ENCODE measurements at regions of chr1 and their contacts with region 1.

Region 1: DNA sequence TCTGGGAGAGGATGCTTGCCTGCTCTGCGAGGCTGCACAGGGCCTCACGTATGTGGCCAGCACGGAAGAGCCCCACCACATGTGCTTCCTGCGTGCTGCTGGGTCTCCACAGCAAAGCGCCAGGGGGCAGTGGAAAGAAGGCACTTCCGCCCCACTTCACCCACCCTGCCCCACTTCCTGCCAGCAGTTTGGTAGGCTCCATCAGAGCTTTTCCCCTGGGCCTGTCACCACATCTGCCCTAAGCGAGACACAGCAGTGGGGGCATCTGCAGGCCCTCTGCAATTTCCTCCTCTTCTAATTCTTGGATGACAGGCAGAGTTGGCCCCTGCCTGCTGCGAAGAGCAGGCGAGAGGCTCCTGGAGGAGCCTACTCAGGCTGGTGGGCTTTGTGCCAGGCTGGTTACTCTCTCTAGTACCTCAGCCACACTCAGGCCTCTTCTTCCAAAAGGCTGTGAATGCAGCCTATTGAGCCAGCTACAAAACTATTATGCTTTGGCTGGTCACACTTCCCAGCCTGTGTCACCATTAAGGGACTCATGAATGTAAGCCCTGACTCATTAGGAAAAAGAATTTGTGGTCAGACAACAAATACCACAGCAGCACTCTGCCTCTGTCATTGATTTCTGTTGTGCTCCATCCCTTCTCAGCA is 25.0 kb downstream of the CD244 start:
- DNase-seq: peak; percentile 90
- H3K4me3 Mint-ChIP-seq: peak overlapping the region; percentile 16
- H3K27ac Mint-ChIP-seq: peak overlapping the region; percentile 82
- H3K4me1 Mint-ChIP-seq: peaks cover 49% of the 10 kb centered on the region
- H3K27me3 Mint-ChIP-seq: no peaks in the 10 kb centered on the region

Region 2: DNA sequence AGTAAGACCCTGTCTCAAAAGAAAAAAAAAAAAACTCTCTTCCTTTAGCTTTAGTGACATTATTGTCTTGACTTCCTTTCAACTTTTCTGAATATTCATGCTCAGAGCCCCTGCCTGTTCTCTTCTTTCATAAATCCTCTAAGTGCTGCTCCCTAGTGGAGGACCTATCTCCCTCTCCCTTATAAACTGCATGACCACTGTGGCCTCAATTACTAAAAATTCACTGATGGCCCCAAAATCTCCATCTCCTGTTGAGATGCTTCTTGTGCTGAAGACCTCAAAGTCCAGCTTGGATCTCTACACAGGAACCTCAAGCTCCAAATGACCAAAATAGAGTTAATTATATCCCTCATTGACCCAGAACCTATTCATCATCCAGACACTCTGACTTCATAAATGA is 39.5 kb after region 1 on chr1:
- CTCF ChIA-PET with region 1: interaction called, 14 read pairs
- intact Hi-C with region 1: loop called (anchors 1 kb)
- DNase-seq: peak; percentile 14
- H3K4me3 Mint-ChIP-seq: no peak overlapping the region
- H3K27ac Mint-ChIP-seq: no peak overlapping the region
- H3K4me1 Mint-ChIP-seq: peaks cover 16% of the 10 kb centered on the region
- H3K27me3 Mint-ChIP-seq: no peaks in the 10 kb centered on the region

Region 3: GRCh38 chr1:160884579-160884978 is 46.9 kb after region 1 on chr1:
- CTCF ChIA-PET with region 1: interaction called, 18 read pairs
- intact Hi-C with region 1: no loop called
- DNase-seq: no peak
- H3K4me3 Mint-ChIP-seq: no peak overlapping the region
- H3K27ac Mint-ChIP-seq: no peak overlapping the region
- H3K4me1 Mint-ChIP-seq: no peaks in the 10 kb centered on the region
- H3K27me3 Mint-ChIP-seq: no peaks in the 10 kb centered on the region

Region 4: GRCh38 chr1:160987359-160988062 is 149.8 kb after region 1 on chr1:
- CTCF ChIA-PET with region 1: interaction called, 31 read pairs
- intact Hi-C with region 1: loop called (anchors 1 kb)
- DNase-seq: no peak
- H3K4me3 Mint-ChIP-seq: no peak overlapping the region
- H3K27ac Mint-ChIP-seq: no peak overlapping the region
- H3K4me1 Mint-ChIP-seq: no peaks in the 10 kb centered on the region
- H3K27me3 Mint-ChIP-seq: peaks cover 5% of the 10 kb centered on the region

Measured in activated naive CD4-positive, alpha-beta T cell treated with anti-CD3 and anti-CD28 coated beads for 36 hours (primary cell).